Mammary epithelial cell (primary cell): ENCODE measurements at regions of chr12 and their contacts with region 1.

Region 1: DNA sequence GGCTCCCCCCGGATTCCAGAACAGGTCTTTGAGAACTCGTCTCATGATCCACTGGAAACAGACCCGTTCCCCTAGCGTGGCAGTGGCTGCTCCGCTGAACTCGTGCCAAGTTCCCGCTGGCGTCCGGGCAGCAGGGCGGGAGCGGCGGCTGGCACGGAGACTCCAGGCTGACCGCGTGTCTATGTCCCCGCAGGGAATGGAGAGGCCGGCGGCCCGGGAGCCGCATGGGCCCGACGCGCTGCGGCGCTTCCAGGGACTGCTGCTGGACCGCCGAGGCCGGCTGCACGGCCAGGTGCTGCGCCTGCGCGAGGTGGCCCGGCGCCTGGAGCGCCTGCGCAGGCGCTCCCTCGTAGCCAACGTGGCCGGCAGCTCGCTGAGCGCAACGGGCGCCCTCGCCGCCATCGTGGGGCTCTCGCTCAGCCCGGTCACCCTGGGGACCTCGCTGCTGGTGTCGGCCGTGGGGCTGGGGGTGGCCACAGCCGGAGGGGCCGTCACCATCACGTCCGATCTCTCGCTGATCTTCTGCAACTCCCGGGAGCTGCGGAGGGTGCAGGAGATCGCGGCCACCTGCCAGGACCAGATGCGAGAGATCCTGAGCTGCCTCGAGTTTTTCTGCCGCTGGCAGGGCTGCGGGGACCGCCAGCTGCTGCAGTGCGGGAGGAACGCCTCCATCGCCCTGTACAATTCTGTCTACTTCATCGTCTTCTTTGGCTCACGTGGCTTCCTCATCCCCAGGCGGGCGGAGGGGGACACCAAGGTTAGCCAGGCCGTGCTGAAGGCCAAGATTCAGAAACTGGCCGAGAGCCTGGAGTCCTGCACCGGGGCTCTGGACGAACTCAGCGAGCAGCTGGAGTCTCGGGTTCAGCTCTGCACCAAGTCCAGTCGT is 1.5 kb downstream of the APOLD1 start:
- DNase-seq: peak; percentile 74
- H3K4me3 ChIP-seq: peak overlapping the region; percentile 51 to 62 (median 58)
- H3K27ac ChIP-seq: peak overlapping the region; percentile 40
- H3K4me1 ChIP-seq: peaks cover 27% of the 10 kb centered on the region
- H3K27me3 ChIP-seq: no peaks in the 10 kb centered on the region
- CTCF ChIP-seq: no peak

Region 2: GRCh38 chr12:12533238-12533829 is 253.6 kb before region 1 on chr12:
- CTCF ChIA-PET with region 1: no interaction called
- dilution Hi-C with region 1: no loop called
- in situ Hi-C with region 1: no loop called
- intact Hi-C with region 1: no loop called
- DNase-seq: peak; percentile 41
- H3K4me3 ChIP-seq: no peak overlapping the region
- H3K27ac ChIP-seq: peak overlapping the region; percentile 37
- H3K4me1 ChIP-seq: peaks cover 9% of the 10 kb centered on the region
- H3K27me3 ChIP-seq: no peaks in the 10 kb centered on the region
- CTCF ChIP-seq: no peak

Region 3: GRCh38 chr12:12736759-12737676 is 49.9 kb before region 1 on chr12:
- CTCF ChIA-PET with region 1: interaction called, 12 read pairs
- dilution Hi-C with region 1: no loop called
- in situ Hi-C with region 1: no loop called
- intact Hi-C with region 1: no loop called
- DNase-seq: peak; percentile 27
- H3K4me3 ChIP-seq: no peak overlapping the region
- H3K27ac ChIP-seq: no peak overlapping the region
- H3K4me1 ChIP-seq: peaks cover 6% of the 10 kb centered on the region
- H3K27me3 ChIP-seq: no peaks in the 10 kb centered on the region
- CTCF ChIP-seq: peak; percentile 46 to 53

Region 4: GRCh38 chr12:12770262-12770661 is 16.7 kb before region 1 on chr12:
- CTCF ChIA-PET with region 1: no interaction called
- dilution Hi-C with region 1: no loop called
- in situ Hi-C with region 1: no loop called
- intact Hi-C with region 1: no loop called
- DNase-seq: no peak
- H3K4me3 ChIP-seq: no peak overlapping the region
- H3K27ac ChIP-seq: no peak overlapping the region
- H3K4me1 ChIP-seq: no peaks in the 10 kb centered on the region
- H3K27me3 ChIP-seq: no peaks in the 10 kb centered on the region
- CTCF ChIP-seq: no peak

Region 5: DNA sequence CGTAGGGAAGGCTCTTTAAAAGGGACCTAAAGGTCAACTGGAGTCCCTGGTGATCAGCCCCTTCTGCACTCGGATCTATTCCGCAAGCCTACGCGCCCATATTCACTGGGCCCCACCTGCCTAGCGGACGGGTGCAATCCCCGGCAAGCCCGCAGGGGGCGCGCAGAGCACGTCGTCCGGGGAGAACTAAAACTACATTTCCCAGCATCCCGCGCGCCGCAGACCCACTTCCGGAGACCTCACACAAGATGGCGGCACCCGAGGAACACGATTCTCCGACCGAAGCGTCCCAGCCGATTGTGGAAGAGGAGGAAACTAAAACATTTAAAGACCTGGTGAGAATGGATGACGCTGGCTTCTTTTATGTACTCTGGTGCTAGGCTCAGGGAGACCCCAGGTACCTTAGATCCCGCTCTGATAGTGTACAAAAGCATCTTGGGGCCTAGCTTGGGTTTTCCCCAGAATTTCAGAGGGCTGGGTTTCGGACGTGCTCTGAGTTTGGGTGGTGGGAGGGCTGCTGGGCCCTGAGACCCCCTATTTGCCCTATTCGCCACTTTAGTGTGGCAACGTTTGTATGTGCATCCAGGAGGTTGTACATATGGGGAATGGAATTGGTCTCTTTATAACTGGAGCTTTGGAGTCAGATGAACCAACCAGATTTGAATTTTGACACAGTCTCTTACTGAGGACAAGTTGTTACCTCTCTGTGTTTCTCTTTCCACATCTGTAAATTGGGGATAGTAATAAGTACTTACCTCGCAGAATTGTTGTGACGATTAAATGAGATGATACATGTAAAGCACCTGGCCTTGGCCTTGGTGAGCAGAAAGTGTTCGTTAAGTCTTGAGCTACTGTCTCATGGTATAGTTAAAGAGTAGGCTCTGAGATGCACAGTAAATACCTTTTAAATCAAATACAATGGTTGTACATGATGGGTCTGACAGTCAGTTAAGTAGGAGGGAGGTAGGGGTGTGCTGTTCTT is 26.5 kb after region 1 on chr12 and contains the start of gene DDX47:
- CTCF ChIA-PET with region 1: no interaction called
- dilution Hi-C with region 1: no loop called
- in situ Hi-C with region 1: no loop called
- intact Hi-C with region 1: loop called (anchors 2 kb)
- DNase-seq: peak; percentile 86
- H3K4me3 ChIP-seq: peak within 1 kb of the TSS; percentile 60 to 86 (median 71)
- H3K27ac ChIP-seq: peak within 1 kb of the TSS; percentile 93
- H3K4me1 ChIP-seq: peaks cover 21% of the 10 kb centered on the region
- H3K27me3 ChIP-seq: no peaks in the 10 kb centered on the region
- CTCF ChIP-seq: peak; percentile 93 to 96
- total RNA-seq, gene DDX47: 62.1 to 70.3 TPM

Region 6: DNA sequence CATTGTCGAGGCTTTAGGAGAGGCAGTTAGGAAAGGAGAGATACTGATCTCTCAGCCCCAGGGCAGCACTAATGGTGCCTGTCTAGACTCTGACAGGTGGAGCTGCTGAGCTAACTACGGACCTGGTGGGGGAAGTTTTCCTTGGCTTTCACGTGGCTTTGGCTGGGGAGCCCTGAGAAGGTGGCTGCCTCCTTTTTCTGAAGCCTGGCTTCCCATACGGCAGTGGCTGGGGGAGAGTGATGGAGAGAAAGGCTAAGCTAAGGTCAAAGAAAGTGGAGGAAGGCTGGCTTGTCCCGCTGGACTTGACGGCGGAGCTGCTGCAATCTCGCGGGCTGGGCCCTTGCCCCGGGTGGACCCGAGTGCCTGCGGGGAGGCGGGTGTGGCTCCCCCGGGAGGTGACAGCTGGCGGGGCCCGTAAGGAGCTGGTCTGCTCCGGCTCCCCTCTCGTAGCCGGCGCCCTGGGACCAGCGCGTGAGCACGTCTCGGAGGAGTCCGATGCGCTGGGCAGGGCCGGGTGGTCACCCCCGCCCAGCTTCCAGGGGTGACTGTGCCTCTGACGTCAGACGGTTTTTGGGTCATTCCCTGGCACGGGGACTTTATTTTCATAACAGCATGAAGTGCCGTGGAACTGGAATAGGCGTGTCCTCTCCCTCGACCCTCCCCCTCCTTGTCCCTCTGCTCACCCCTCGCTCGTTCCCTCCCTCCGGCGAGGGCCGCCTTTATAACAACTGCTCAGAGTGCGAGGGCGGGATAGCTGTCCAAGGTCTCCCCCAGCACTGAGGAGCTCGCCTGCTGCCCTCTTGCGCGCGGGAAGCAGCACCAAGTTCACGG is 104.1 kb after region 1 on chr12 and contains the start of gene GPRC5A:
- CTCF ChIA-PET with region 1: no interaction called
- dilution Hi-C with region 1: no loop called
- in situ Hi-C with region 1: no loop called
- intact Hi-C with region 1: loop called (anchors 2 kb)
- DNase-seq: peak; percentile 99
- H3K4me3 ChIP-seq: peak within 1 kb of the TSS; percentile 52 to 61 (median 54)
- H3K27ac ChIP-seq: peak within 1 kb of the TSS; percentile 92
- H3K4me1 ChIP-seq: peaks cover 36% of the 10 kb centered on the region
- H3K27me3 ChIP-seq: no peaks in the 10 kb centered on the region
- CTCF ChIP-seq: peak in 1 of 2 donors; percentile 54
- total RNA-seq, gene GPRC5A: 6.0 to 15.3 TPM

Region 7: DNA sequence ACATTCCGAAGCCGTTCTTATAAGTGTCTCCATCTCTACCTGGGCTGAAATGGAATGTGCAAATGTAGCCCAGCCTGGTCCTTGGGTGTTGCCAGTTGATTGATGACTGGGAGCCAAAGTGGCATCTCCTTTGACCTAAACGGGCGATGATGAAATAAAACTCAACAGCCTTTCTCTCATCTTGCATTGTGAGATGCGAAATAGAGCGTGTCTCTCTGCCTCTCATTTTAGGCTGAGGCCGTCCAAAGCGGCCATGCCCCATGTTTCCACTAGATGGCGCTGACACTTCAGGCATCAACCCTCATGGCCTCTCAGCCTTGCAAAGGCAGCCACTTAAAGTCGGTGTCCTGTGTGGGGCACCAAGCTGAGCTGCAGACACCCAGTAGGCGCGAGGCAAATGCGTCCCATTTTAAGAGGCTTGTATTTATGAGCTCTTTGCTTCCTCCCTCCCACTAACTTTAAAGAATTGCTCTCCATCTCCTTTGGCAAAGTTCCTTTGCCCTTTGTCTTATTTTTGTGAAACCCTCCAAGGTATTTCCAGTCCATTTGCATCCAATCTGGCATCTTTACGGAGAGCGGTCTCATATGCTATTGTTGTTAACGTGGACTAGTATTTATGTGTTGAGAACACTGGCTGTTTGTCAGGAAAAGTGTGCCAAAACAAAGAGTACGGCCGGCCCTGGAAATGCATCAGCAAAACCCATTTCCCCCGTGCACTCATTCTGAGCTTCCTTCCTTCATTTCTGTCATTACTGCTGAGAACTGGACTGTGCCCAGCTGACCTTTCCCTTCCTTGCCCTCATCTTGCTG is 129.4 kb after region 1 on chr12:
- CTCF ChIA-PET with region 1: no interaction called
- dilution Hi-C with region 1: no loop called
- in situ Hi-C with region 1: no loop called
- intact Hi-C with region 1: loop called (anchors 1 kb)
- DNase-seq: peak; percentile 54
- H3K4me3 ChIP-seq: no peak overlapping the region
- H3K27ac ChIP-seq: no peak overlapping the region
- H3K4me1 ChIP-seq: no peaks in the 10 kb centered on the region
- H3K27me3 ChIP-seq: no peaks in the 10 kb centered on the region
- CTCF ChIP-seq: peak; percentile 97 to 99

Region 8: GRCh38 chr12:12983420-12984035 is 196.6 kb after region 1 on chr12:
- CTCF ChIA-PET with region 1: no interaction called
- dilution Hi-C with region 1: no loop called
- in situ Hi-C with region 1: loop called in 1 of 2 experiments (anchors 10 kb)
- intact Hi-C with region 1: loop called (anchors 1 kb)
- DNase-seq: peak; percentile 37
- H3K4me3 ChIP-seq: no peak overlapping the region
- H3K27ac ChIP-seq: no peak overlapping the region
- H3K4me1 ChIP-seq: no peaks in the 10 kb centered on the region
- H3K27me3 ChIP-seq: no peaks in the 10 kb centered on the region
- CTCF ChIP-seq: peak; percentile 55 to 75

Region 9: GRCh38 chr12:13220838-13221237 is 433.9 kb after region 1 on chr12:
- CTCF ChIA-PET with region 1: no interaction called
- dilution Hi-C with region 1: no loop called
- in situ Hi-C with region 1: no loop called
- intact Hi-C with region 1: no loop called
- DNase-seq: no peak
- H3K4me3 ChIP-seq: no peak overlapping the region
- H3K27ac ChIP-seq: no peak overlapping the region
- H3K4me1 ChIP-seq: peaks cover 29% of the 10 kb centered on the region
- H3K27me3 ChIP-seq: no peaks in the 10 kb centered on the region
- CTCF ChIP-seq: no peak

Region 10: GRCh38 chr12:13713556-13714410 is 926.8 kb after region 1 on chr12:
- CTCF ChIA-PET with region 1: no interaction called
- dilution Hi-C with region 1: no loop called
- in situ Hi-C with region 1: no loop called
- intact Hi-C with region 1: no loop called
- DNase-seq: no peak
- H3K4me3 ChIP-seq: no peak overlapping the region
- H3K27ac ChIP-seq: no peak overlapping the region
- H3K4me1 ChIP-seq: no peaks in the 10 kb centered on the region
- H3K27me3 ChIP-seq: no peaks in the 10 kb centered on the region
- CTCF ChIP-seq: no peak